Activated naive CD4-positive, alpha-beta T cell treated with anti-CD3 and anti-CD28 coated beads for 36 hours (primary cell): ENCODE measurements at regions of chr7 and their contacts with region 1.

Region 1: GRCh38 chr7:73811760-73812168 is 19.0 kb upstream of the CLDN4 start:
- DNase-seq: peak; percentile 73
- H3K4me3 Mint-ChIP-seq: no peak overlapping the region
- H3K27ac Mint-ChIP-seq: no peak overlapping the region
- H3K4me1 Mint-ChIP-seq: no peaks in the 10 kb centered on the region
- H3K27me3 Mint-ChIP-seq: peaks cover 8% of the 10 kb centered on the region

Region 2: GRCh38 chr7:73856941-73857340 is 45.2 kb after region 1 on chr7:
- CTCF ChIA-PET with region 1: interaction called, 42 read pairs
- intact Hi-C with region 1: loop called (anchors 1 kb)
- DNase-seq: no peak
- H3K4me3 Mint-ChIP-seq: no peak overlapping the region
- H3K27ac Mint-ChIP-seq: no peak overlapping the region
- H3K4me1 Mint-ChIP-seq: peaks cover 15% of the 10 kb centered on the region
- H3K27me3 Mint-ChIP-seq: peaks cover 19% of the 10 kb centered on the region

Region 3: GRCh38 chr7:73918926-73919693 is 107.3 kb after region 1 on chr7:
- CTCF ChIA-PET with region 1: no interaction called
- intact Hi-C with region 1: no loop called
- DNase-seq: no peak
- H3K4me3 Mint-ChIP-seq: no peak overlapping the region
- H3K27ac Mint-ChIP-seq: no peak overlapping the region
- H3K4me1 Mint-ChIP-seq: no peaks in the 10 kb centered on the region
- H3K27me3 Mint-ChIP-seq: peaks cover 7% of the 10 kb centered on the region